Mammary epithelial cell (primary cell): ENCODE measurements at regions of chr21 and their contacts with region 1.

Region 1: DNA sequence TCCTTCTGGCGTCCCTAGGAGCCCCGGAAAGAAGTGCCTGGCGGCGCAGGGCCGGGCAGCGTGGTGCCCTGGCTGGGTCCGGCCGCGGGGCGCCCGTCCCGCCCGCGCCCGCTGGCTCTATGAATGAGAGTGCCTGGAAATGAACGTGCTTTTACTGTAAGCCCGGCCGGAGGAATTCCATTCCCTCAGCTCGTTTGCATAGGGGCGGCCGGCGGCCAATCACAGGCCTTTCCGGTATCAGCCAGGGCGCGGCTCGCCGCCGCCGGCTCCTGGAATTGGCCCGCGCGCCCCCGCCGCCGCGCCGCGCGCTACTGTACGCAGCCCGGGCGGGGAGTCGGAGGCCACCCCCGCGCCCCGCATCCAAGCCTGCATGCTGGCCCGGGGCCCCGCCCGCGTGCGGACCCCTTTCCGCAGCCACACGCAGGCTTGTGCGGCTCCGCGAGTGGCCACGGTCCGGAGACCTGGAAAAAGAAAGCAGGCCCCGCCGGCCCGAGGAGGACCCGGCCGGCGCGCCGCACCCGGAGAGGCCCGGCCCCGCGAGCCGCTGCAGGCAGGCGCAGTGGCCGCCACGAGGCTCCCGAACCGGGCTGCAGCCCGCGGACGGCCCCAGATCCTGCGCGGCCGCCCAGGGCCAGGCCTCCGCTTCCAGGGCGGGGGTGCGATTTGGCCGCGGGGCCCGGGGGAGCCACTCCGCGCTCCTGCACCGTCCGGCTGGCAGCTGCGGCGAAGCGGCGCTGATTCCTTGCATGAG is 160.4 kb downstream of the RUNX1 start:
- DNase-seq: peak; percentile 93
- H3K4me3 ChIP-seq: peak overlapping the region; percentile 89 to 99 (median 94)
- H3K27ac ChIP-seq: peak overlapping the region; percentile 97
- H3K4me1 ChIP-seq: peaks cover 19% of the 10 kb centered on the region
- H3K27me3 ChIP-seq: no peaks in the 10 kb centered on the region
- CTCF ChIP-seq: no peak

Region 2: DNA sequence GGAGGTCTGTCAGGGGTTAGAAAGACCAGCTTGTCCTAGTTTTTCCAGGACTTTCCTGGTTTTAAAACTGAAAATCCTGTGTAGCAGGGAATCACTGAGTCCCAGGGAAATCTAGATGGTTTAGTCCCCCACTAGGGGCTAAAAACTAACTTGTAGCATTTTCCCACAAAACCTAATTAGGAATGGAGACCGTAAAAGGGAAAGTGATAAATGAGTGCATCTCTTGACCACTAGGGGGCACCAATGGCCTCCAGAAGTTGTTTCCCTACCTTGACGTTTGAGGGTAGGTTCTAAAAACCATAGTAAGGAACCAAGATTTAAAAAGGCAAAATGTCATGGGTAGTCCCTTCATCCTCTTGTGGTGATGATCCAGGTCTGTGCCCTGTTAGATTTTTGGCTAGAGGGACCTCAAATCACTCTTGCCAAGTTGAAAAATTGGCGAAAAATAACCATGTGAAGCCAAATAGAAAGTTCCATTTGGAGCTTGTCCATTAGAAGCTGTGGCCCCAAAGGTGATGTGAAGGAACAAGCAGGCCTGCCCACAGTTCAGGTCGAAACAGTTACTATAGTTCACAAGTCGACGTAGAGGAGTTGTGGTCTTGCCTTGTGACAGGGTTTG is 195.4 kb before region 1 on chr21:
- CTCF ChIA-PET with region 1: no interaction called
- dilution Hi-C with region 1: no loop called
- in situ Hi-C with region 1: no loop called
- intact Hi-C with region 1: loop called (anchors 1 kb)
- DNase-seq: peak; percentile 39
- H3K4me3 ChIP-seq: no peak overlapping the region
- H3K27ac ChIP-seq: no peak overlapping the region
- H3K4me1 ChIP-seq: peaks cover 6% of the 10 kb centered on the region
- H3K27me3 ChIP-seq: no peaks in the 10 kb centered on the region
- CTCF ChIP-seq: peak; percentile 83 to 92

Region 3: DNA sequence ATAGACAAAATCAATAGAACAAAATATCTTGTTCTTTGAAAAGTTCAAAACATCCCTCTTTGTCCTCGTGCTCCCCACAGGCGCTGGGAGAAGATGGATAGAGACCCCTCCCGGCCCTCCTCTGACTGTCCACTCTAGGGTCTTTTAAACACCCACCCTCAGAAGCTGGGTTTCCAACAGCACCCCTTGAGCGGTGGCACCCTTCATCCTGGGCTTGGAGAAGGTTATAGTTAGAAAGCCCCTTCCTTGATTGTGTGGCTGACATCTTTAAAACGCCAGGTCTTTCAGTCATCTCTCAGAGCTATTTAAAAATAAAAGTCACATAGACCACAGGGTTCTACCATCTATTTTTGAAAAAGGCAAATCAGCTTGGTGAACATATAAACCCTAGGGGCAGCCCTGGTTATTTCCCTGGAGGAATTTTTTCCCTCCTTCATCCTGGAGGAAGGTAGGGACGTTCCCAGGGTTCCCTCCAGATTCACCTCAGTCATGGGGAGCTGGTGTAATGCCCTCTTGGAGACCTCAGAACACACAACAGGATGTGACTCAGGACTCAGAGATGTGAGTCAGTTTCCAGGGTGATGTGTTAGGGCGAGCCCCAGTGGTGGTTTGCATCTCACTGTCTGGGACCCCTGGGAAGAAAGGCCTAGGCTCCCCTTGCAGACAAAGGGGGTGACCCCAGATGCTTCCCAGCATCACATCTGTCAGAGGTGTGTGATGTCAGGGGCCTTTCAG is 81.4 kb before region 1 on chr21:
- CTCF ChIA-PET with region 1: no interaction called
- dilution Hi-C with region 1: no loop called
- in situ Hi-C with region 1: no loop called
- intact Hi-C with region 1: no loop called
- DNase-seq: peak; percentile 97
- H3K4me3 ChIP-seq: no peak overlapping the region
- H3K27ac ChIP-seq: peak overlapping the region; percentile 100
- H3K4me1 ChIP-seq: peaks cover 78% of the 10 kb centered on the region
- H3K27me3 ChIP-seq: no peaks in the 10 kb centered on the region
- CTCF ChIP-seq: peak in 1 of 2 donors; percentile 21

Region 4: DNA sequence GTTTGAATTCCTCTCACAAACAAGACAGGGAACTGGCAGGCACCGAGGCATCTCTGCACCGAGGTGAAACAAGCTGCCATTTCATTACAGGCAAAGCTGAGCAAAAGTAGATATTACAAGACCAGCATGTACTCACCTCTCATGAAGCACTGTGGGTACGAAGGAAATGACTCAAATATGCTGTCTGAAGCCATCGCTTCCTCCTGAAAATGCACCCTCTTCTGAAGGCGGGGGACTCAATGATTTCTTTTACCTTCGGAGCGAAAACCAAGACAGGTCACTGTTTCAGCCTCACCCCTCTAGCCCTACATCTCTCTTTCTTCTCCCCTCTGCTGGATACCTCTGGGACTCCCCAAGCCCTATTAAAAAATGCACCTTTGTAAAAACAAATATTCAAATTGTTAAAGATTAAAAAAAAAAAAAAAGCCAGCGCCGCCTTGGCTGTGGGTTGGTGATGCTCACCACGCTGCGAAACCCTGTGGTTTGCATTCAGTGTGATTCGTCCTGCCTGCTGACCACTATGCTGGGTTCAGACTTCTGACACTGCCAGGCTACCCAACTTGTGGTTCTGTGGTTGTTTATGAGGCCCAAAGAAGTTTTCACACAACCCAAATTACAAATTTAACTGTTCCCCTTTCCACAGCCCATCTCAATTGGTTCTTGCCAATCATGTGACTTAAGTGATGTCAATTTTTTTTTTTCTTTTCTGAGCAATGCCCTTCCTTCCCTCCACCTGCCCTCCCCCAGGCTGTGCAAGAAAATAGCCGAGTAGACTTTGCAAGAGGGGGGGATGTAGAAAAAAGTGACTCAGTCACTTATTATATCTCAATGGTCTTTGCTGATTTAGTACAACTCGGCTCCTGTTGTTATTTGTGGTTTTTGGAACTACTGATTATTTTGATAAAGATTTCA is 160.2 kb after region 1 on chr21 and contains the start of gene RUNX1:
- CTCF ChIA-PET with region 1: interaction called, 3 read pairs
- dilution Hi-C with region 1: no loop called
- in situ Hi-C with region 1: no loop called
- intact Hi-C with region 1: loop called (anchors 1 kb)
- DNase-seq: peak; percentile 91
- H3K4me3 ChIP-seq: peak within 1 kb of the TSS; percentile 13 to 35 (median 34)
- H3K27ac ChIP-seq: peak within 1 kb of the TSS; percentile 90
- H3K4me1 ChIP-seq: peaks cover 32% of the 10 kb centered on the region
- H3K27me3 ChIP-seq: no peaks in the 10 kb centered on the region
- CTCF ChIP-seq: no peak
- total RNA-seq, gene RUNX1: 126 to 133 TPM

Region 5: DNA sequence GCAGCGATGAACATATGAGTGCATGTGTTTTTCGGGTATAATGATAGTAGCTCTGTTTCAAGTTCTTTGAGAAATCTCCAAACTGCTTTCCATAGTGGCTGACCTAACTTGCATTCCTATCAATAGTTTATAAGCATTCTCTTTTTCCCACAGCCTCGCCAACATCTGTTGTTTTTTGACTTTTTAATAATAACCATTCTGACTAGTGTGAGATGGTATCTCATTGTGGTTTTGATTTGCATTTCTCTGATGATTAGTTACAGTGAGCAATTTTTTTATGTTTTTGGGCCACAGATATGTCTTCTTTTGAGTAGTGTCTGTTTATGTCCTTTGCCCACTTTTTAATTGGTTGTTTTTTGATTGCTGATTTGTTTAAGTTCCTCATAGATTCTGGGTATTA is 171.0 kb after region 1 on chr21:
- CTCF ChIA-PET with region 1: no interaction called
- dilution Hi-C with region 1: no loop called
- in situ Hi-C with region 1: no loop called
- intact Hi-C with region 1: no loop called
- DNase-seq: peak; percentile 59
- H3K4me3 ChIP-seq: no peak overlapping the region
- H3K27ac ChIP-seq: no peak overlapping the region
- H3K4me1 ChIP-seq: peaks cover 19% of the 10 kb centered on the region
- H3K27me3 ChIP-seq: no peaks in the 10 kb centered on the region
- CTCF ChIP-seq: no peak

Region 6: GRCh38 chr21:35198031-35198431 is 309.3 kb after region 1 on chr21:
- CTCF ChIA-PET with region 1: interaction called, 5 read pairs
- dilution Hi-C with region 1: no loop called
- in situ Hi-C with region 1: loop called in 1 of 2 experiments (anchors 5 kb)
- intact Hi-C with region 1: loop called (anchors 1 kb)
- DNase-seq: peak; percentile 99
- H3K4me3 ChIP-seq: no peak overlapping the region
- H3K27ac ChIP-seq: peak overlapping the region; percentile 96
- H3K4me1 ChIP-seq: peaks cover 23% of the 10 kb centered on the region
- H3K27me3 ChIP-seq: no peaks in the 10 kb centered on the region
- CTCF ChIP-seq: no peak

Region 7: GRCh38 chr21:35400233-35400957 is 511.7 kb after region 1 on chr21:
- CTCF ChIA-PET with region 1: interaction called, 5 read pairs
- dilution Hi-C with region 1: no loop called
- in situ Hi-C with region 1: loop called in 1 of 2 experiments (anchors 5 kb)
- intact Hi-C with region 1: loop called (anchors 1 kb)
- DNase-seq: peak; percentile 81
- H3K4me3 ChIP-seq: peak overlapping the region in 1 of 3 experiments; percentile 30
- H3K27ac ChIP-seq: peak overlapping the region; percentile 80
- H3K4me1 ChIP-seq: peaks cover 36% of the 10 kb centered on the region
- H3K27me3 ChIP-seq: no peaks in the 10 kb centered on the region
- CTCF ChIP-seq: peak; percentile 57 to 69

Region 8: GRCh38 chr21:35616090-35616489 is 727.3 kb after region 1 on chr21:
- CTCF ChIA-PET with region 1: no interaction called
- dilution Hi-C with region 1: no loop called
- in situ Hi-C with region 1: loop called in 1 of 2 experiments (anchors 25 kb)
- intact Hi-C with region 1: loop called (anchors 1 kb)
- DNase-seq: peak; percentile 40
- H3K4me3 ChIP-seq: no peak overlapping the region
- H3K27ac ChIP-seq: peak overlapping the region; percentile 25
- H3K4me1 ChIP-seq: peaks cover 54% of the 10 kb centered on the region
- H3K27me3 ChIP-seq: no peaks in the 10 kb centered on the region
- CTCF ChIP-seq: peak; percentile 50 to 59

Region 9: DNA sequence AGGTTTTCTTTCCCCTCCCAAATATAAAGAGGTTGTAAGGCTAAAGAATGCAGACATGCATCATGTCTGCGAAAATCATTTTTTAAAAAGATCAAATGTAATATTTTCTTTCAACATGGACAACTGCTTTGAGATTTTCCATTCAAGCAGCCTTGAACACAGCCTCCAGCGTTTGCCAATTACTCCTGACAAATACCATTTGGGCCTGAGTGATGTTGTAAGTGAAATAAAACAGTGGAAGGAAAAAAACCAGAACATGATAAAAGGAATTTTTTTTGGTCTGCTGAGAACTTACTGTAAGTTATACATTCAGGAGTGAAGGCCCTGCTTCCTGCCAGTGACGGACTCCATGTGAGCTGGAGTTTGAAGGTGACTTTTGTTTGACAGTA is 1134.3 kb after region 1 on chr21:
- CTCF ChIA-PET with region 1: no interaction called
- dilution Hi-C with region 1: no loop called
- in situ Hi-C with region 1: loop called in 1 of 2 experiments (anchors 25 kb)
- intact Hi-C with region 1: loop called (anchors 1 kb)
- DNase-seq: no peak
- H3K4me3 ChIP-seq: no peak overlapping the region
- H3K27ac ChIP-seq: peak overlapping the region; percentile 72
- H3K4me1 ChIP-seq: peaks cover 19% of the 10 kb centered on the region
- H3K27me3 ChIP-seq: no peaks in the 10 kb centered on the region
- CTCF ChIP-seq: no peak